ENCODE measurements at regions of chr2 and their contacts with region 1.

Region 1: GRCh38 chr2:227228061-227228667 is 63.7 kb downstream of the COL4A3 start:
- DNase-seq: no peak
- ATAC-seq: peak; percentile 92

Region 2: GRCh38 chr2:227163998-227164762 is 64.0 kb before region 1 on chr2 and contains the starts of genes COL4A3 and COL4A4:
- intact Hi-C with region 1: no loop called
- DNase-seq: peak; percentile 84
- ATAC-seq: peak; percentile 95
- total RNA-seq, gene COL4A3: 5.5 TPM
- total RNA-seq, gene COL4A4: 13.6 TPM

Region 3: GRCh38 chr2:227179988-227180685 is 48.0 kb before region 1 on chr2:
- intact Hi-C with region 1: loop called (anchors 5 kb)
- DNase-seq: no peak
- ATAC-seq: peak; percentile 95